ENCODE measurements at regions of chr10 and their contacts with region 1.

Region 1: GRCh38 chr10:97210543-97210961 is 24.8 kb upstream of the SLIT1 start:
- DNase-seq: peak; percentile 50 to 64 (median 57)
- H3K4me3 ChIP-seq: no peak overlapping the region
- H3K4me3 Mint-ChIP-seq: no peak overlapping the region
- H3K27ac ChIP-seq: no peak overlapping the region
- H3K27ac Mint-ChIP-seq: no peak overlapping the region
- H3K4me1 ChIP-seq: no peaks in the 10 kb centered on the region
- H3K4me1 Mint-ChIP-seq: no peaks in the 10 kb centered on the region
- H3K27me3 ChIP-seq: no peaks in the 10 kb centered on the region
- H3K27me3 Mint-ChIP-seq: peaks cover 0 to 1% of the 10 kb centered on the region in 2 donors

Region 2: GRCh38 chr10:96395931-96396877 is 814.3 kb before region 1 on chr10:
- CTCF ChIA-PET with region 1: interaction called, 17 read pairs
- POLR2A ChIA-PET with region 1: no interaction called
- intact Hi-C with region 1: no loop called
- DNase-seq: peak in 4 of 5 donors; percentile 46 to 53 (median 48)
- H3K4me3 ChIP-seq: peak overlapping the region in 1 of 2 donors; percentile 14
- H3K4me3 Mint-ChIP-seq: peak overlapping the region in 3 of 8 donors; percentile 34 to 64 (median 56)
- H3K27ac ChIP-seq: no peak overlapping the region
- H3K27ac Mint-ChIP-seq: peak overlapping the region in 1 of 7 donors; percentile 44
- H3K4me1 ChIP-seq: no peaks in the 10 kb centered on the region
- H3K4me1 Mint-ChIP-seq: peaks cover 0 to 4% (median 2%) of the 10 kb centered on the region in 4 donors
- H3K27me3 ChIP-seq: no peaks in the 10 kb centered on the region
- H3K27me3 Mint-ChIP-seq: peaks cover 16 to 34% of the 10 kb centered on the region in 2 donors

Region 3: GRCh38 chr10:97072851-97073665 is 137.5 kb before region 1 on chr10:
- CTCF ChIA-PET with region 1: interaction called, 417 read pairs
- POLR2A ChIA-PET with region 1: interaction called, 8 read pairs
- intact Hi-C with region 1: loop called (anchors 1 kb)
- DNase-seq: peak; percentile 63 to 75 (median 70)
- H3K4me3 ChIP-seq: no peak overlapping the region
- H3K4me3 Mint-ChIP-seq: no peak overlapping the region
- H3K27ac ChIP-seq: no peak overlapping the region
- H3K27ac Mint-ChIP-seq: no peak overlapping the region
- H3K4me1 ChIP-seq: no peaks in the 10 kb centered on the region
- H3K4me1 Mint-ChIP-seq: peaks cover 5 to 11% (median 7%) of the 10 kb centered on the region in 4 donors
- H3K27me3 ChIP-seq: no peaks in the 10 kb centered on the region
- H3K27me3 Mint-ChIP-seq: peaks cover 12 to 36% of the 10 kb centered on the region in 2 donors

Region 4: GRCh38 chr10:97149079-97149531 is 61.4 kb before region 1 on chr10:
- CTCF ChIA-PET with region 1: interaction called, 11 read pairs
- POLR2A ChIA-PET with region 1: no interaction called
- intact Hi-C with region 1: no loop called
- DNase-seq: no peak
- H3K4me3 ChIP-seq: no peak overlapping the region
- H3K4me3 Mint-ChIP-seq: no peak overlapping the region
- H3K27ac ChIP-seq: no peak overlapping the region
- H3K27ac Mint-ChIP-seq: no peak overlapping the region
- H3K4me1 ChIP-seq: no peaks in the 10 kb centered on the region
- H3K4me1 Mint-ChIP-seq: no peaks in the 10 kb centered on the region
- H3K27me3 ChIP-seq: no peaks in the 10 kb centered on the region
- H3K27me3 Mint-ChIP-seq: no peaks in the 10 kb centered on the region

Region 5: GRCh38 chr10:97234400-97234799 is 23.8 kb after region 1 on chr10:
- CTCF ChIA-PET with region 1: interaction called, 19 read pairs
- POLR2A ChIA-PET with region 1: no interaction called
- intact Hi-C with region 1: no loop called
- DNase-seq: peak in 3 of 5 donors; percentile 2 to 6 (median 3)
- H3K4me3 ChIP-seq: no peak overlapping the region
- H3K4me3 Mint-ChIP-seq: no peak overlapping the region
- H3K27ac ChIP-seq: no peak overlapping the region
- H3K27ac Mint-ChIP-seq: no peak overlapping the region
- H3K4me1 ChIP-seq: no peaks in the 10 kb centered on the region
- H3K4me1 Mint-ChIP-seq: peaks cover 0 to 2% (median under 1%) of the 10 kb centered on the region in 4 donors
- H3K27me3 ChIP-seq: no peaks in the 10 kb centered on the region
- H3K27me3 Mint-ChIP-seq: no peaks in the 10 kb centered on the region

Region 6: GRCh38 chr10:97270523-97271154 is 60.1 kb after region 1 on chr10:
- CTCF ChIA-PET with region 1: no interaction called
- POLR2A ChIA-PET with region 1: no interaction called
- intact Hi-C with region 1: no loop called
- DNase-seq: no peak
- H3K4me3 ChIP-seq: no peak overlapping the region
- H3K4me3 Mint-ChIP-seq: no peak overlapping the region
- H3K27ac ChIP-seq: no peak overlapping the region
- H3K27ac Mint-ChIP-seq: no peak overlapping the region
- H3K4me1 ChIP-seq: no peaks in the 10 kb centered on the region
- H3K4me1 Mint-ChIP-seq: peaks cover 0 to 32% (median 8%) of the 10 kb centered on the region in 4 donors
- H3K27me3 ChIP-seq: no peaks in the 10 kb centered on the region
- H3K27me3 Mint-ChIP-seq: no peaks in the 10 kb centered on the region

Region 7: DNA sequence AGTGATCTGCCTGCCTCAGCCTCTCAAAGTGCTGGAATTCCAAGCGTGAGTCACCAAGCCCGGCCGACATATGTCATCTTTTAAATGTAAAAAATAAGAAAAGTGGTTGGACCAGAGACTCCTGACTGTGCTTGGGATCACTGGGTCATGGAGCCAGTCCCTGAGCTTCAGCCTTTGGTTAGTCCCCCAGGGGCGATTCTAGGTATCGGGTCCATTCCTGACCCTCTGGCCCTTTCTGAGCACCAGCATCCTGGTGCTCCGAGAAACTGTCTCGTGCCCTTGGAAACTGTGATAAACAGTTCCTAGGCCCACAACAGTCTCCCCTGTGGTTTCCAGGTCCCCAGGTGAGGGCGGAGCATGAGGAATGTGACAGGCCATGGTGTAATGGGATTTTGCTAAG is 320.9 kb after region 1 on chr10:
- CTCF ChIA-PET with region 1: no interaction called
- POLR2A ChIA-PET with region 1: no interaction called
- intact Hi-C with region 1: no loop called
- DNase-seq: no peak
- H3K4me3 ChIP-seq: no peak overlapping the region
- H3K4me3 Mint-ChIP-seq: no peak overlapping the region
- H3K27ac ChIP-seq: no peak overlapping the region
- H3K27ac Mint-ChIP-seq: no peak overlapping the region
- H3K4me1 ChIP-seq: no peaks in the 10 kb centered on the region
- H3K4me1 Mint-ChIP-seq: peaks cover 0 to 2% (median 1%) of the 10 kb centered on the region in 4 donors
- H3K27me3 ChIP-seq: no peaks in the 10 kb centered on the region
- H3K27me3 Mint-ChIP-seq: no peaks in the 10 kb centered on the region

Measured in CD4-positive, alpha-beta memory T cell (primary cell).